Aorta (tissue), 5 donors: ENCODE measurements at regions of chr1 and their contacts with region 1.

Region 1: GRCh38 chr1:220089650-220090556 is at the start of gene BPNT1:
- DNase-seq: peak; percentile 96 to 97
- ATAC-seq: peak; percentile 93
- H3K4me3 ChIP-seq: peak within 1 kb of the TSS; percentile 84 to 95
- H3K27ac ChIP-seq: peak within 1 kb of the TSS in 1 of 2 donors; percentile 67
- H3K4me1 ChIP-seq: no peaks in the 10 kb centered on the region
- H3K27me3 ChIP-seq: no peaks in the 10 kb centered on the region
- total RNA-seq, gene BPNT1: 18.3 to 20.0 TPM

Region 2: GRCh38 chr1:219990782-219991510 is 99.0 kb before region 1 on chr1:
- intact Hi-C with region 1: loop called in 1 of 2 experiments (anchors 5 kb)
- DNase-seq: no peak
- ATAC-seq: peak; percentile 68
- H3K4me3 ChIP-seq: no peak overlapping the region
- H3K27ac ChIP-seq: no peak overlapping the region
- H3K4me1 ChIP-seq: no peaks in the 10 kb centered on the region
- H3K27me3 ChIP-seq: no peaks in the 10 kb centered on the region

Region 3: DNA sequence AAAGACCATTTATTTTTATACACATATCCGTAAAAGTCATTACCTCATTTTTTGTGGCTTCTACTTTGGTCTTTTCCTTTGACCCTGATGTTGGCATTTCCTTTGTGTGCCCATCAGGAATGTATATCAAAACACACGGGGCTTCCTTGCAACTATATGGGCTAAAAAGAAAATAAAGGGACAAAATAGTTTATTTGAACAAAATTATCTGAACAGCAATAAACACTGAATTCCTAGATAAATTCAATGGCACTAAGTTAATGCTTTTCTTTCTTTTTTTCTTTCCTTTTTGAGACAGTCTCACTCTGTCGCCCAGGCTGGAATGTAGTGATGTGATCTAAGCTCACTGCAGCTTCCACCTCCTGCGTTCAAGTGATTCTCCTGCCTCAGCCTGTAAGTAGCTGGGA is 88.8 kb before region 1 on chr1:
- intact Hi-C with region 1: no loop called
- DNase-seq: no peak
- ATAC-seq: no peak
- H3K4me3 ChIP-seq: no peak overlapping the region
- H3K27ac ChIP-seq: peak overlapping the region; percentile 22 to 86
- H3K4me1 ChIP-seq: peaks cover 0 to 3% of the 10 kb centered on the region in 2 donors
- H3K27me3 ChIP-seq: no peaks in the 10 kb centered on the region

Region 4: GRCh38 chr1:220028346-220028895 is 61.5 kb before region 1 on chr1:
- intact Hi-C with region 1: loop called in 1 of 2 experiments (anchors 10 kb)
- DNase-seq: no peak
- ATAC-seq: no peak
- H3K4me3 ChIP-seq: no peak overlapping the region
- H3K27ac ChIP-seq: no peak overlapping the region
- H3K4me1 ChIP-seq: no peaks in the 10 kb centered on the region
- H3K27me3 ChIP-seq: no peaks in the 10 kb centered on the region

Region 5: GRCh38 chr1:220046052-220046930 is 43.6 kb before region 1 on chr1 and contains the start of gene EPRS1:
- intact Hi-C with region 1: loop called in 1 of 2 experiments (anchors 5 kb)
- DNase-seq: peak; percentile 96 to 98
- ATAC-seq: peak; percentile 99
- H3K4me3 ChIP-seq: peak within 1 kb of the TSS; percentile 71 to 74
- H3K27ac ChIP-seq: peak within 1 kb of the TSS in 1 of 2 donors; percentile 84
- H3K4me1 ChIP-seq: no peaks in the 10 kb centered on the region
- H3K27me3 ChIP-seq: no peaks in the 10 kb centered on the region
- total RNA-seq, gene EPRS1: 66.1 to 69.3 TPM

Region 6: GRCh38 chr1:220056374-220056773 is 33.5 kb before region 1 on chr1:
- intact Hi-C with region 1: no loop called
- DNase-seq: no peak
- ATAC-seq: no peak
- H3K4me3 ChIP-seq: no peak overlapping the region
- H3K27ac ChIP-seq: no peak overlapping the region
- H3K4me1 ChIP-seq: no peaks in the 10 kb centered on the region
- H3K27me3 ChIP-seq: no peaks in the 10 kb centered on the region

Region 7: GRCh38 chr1:220139966-220140365 is 50.1 kb after region 1 on chr1:
- intact Hi-C with region 1: no loop called
- DNase-seq: no peak
- ATAC-seq: no peak
- H3K4me3 ChIP-seq: no peak overlapping the region
- H3K27ac ChIP-seq: peak overlapping the region in 1 of 2 donors; percentile 63
- H3K4me1 ChIP-seq: no peaks in the 10 kb centered on the region
- H3K27me3 ChIP-seq: no peaks in the 10 kb centered on the region

Region 8: DNA sequence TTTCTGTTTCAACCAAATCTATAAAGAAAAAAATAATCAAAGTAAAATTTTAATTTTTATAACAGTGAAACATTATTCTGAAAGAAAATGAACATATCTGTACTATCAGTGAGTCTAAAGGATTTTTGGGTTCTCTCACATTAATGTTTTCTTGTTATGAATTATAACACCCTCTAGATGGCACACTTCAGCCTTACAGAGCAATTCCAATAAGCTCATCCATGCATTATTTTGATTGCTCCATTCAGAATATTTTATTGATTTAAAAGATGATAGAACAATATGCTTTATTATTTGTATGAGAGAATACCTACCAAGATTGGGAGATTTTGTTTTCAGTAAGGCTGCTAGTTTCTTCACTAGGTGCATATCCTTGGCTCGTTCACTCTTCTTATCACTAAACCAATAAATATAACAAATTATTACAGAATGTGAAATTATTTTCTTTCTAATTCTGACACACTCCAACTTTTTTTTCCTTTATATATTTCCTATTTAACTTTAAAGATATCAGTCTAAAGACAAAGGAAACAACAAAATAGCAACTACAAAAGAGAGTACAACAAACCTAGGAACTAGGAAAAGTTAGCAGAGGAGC is 99.9 kb after region 1 on chr1:
- intact Hi-C with region 1: no loop called
- DNase-seq: no peak
- ATAC-seq: no peak
- H3K4me3 ChIP-seq: no peak overlapping the region
- H3K27ac ChIP-seq: no peak overlapping the region
- H3K4me1 ChIP-seq: no peaks in the 10 kb centered on the region
- H3K27me3 ChIP-seq: no peaks in the 10 kb centered on the region